RWPE1 (cell line): ENCODE measurements at regions of chr2 and their contacts with region 1.

Region 1: DNA sequence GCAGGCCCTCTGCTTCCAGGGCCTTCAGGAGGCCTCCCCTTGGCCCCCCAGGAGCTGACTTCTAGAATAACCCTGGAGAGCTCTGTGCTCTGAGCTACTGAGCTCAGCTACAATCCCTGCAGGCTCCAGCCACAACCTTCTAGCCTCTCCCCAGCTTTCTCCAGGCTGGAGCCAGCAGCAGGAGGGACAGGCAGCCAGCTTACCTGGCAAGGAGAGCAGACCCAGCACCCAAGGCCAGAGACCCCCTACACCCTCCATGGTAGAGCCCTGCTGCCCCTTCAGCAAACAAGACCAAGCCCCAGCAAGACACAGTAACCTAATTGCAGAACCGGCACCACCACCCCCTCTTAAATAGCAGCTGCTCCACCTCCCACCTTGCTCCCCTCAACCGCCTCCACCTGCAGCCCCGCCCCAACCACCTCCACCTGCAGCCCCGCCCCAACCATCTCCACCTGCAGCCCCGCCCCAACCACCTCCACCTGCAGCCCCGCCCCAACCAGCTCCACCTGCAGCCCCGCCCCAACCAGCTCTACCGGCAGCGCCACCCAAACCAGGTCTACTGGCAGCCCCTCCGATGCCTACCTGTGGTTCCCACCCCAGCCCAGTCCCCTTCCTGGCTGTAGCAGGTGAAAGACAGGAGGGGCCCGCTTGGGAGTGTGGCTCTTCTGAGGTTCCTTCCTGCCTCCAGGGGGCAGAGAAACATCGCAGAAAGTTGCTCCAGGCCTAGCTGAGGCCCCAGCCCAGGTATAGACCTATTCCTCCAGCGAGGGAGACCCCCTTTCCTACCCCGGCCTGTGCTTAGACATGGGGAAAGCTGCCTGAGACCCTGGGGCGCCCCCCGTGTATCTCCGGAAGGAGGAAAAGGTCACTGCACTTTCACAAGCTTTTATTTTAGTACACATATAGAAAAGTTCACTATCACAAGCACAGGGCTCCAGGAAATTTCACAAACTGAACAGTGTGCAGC is at the start of gene ASTL:
- DNase-seq: peak; percentile 40
- H3K27ac ChIP-seq: no peak within 1 kb of the TSS
- CTCF ChIP-seq: peak; percentile 37

Region 2: GRCh38 chr2:96174251-96175144 is 36.0 kb after region 1 on chr2:
- CTCF ChIA-PET with region 1: interaction called, 32 read pairs
- POLR2A ChIA-PET with region 1: no interaction called
- DNase-seq: peak; percentile 77
- H3K27ac ChIP-seq: no peak overlapping the region
- CTCF ChIP-seq: peak; percentile 79

Region 3: GRCh38 chr2:96260404-96261260 is 122.2 kb after region 1 on chr2:
- CTCF ChIA-PET with region 1: no interaction called
- POLR2A ChIA-PET with region 1: no interaction called
- DNase-seq: peak; percentile 88
- H3K27ac ChIP-seq: peak overlapping the region; percentile 94
- CTCF ChIP-seq: peak; percentile 63